ENCODE measurements at regions of chr16 and their contacts with region 1.

Region 1: GRCh38 chr16:24499193-24499814 is 40.1 kb upstream of the RBBP6 start:
- DNase-seq: peak in 1 of 2 donors; percentile 34
- ATAC-seq: no peak
- H3K4me3 ChIP-seq: no peak overlapping the region
- H3K27ac ChIP-seq: no peak overlapping the region
- H3K4me1 ChIP-seq: no peaks in the 10 kb centered on the region
- H3K27me3 ChIP-seq: no peaks in the 10 kb centered on the region

Region 2: DNA sequence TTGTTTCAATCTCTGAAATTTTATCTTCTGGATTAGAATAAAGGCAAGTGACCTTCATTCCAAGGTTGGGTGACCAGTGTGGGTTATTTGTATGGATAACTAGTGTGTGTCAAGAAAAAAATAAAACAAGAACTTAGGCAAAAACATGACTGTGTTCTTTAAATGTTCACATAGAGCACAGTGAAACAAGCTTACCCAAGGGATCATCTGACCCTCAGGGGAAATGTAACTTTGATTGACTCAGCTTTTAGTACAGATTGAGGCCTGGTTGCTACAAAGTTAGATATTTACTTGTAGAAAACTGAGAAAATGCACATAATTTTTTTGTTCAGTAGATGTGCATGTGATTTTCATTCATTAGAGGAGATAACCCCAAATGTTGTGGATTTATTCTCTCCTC is 236.5 kb before region 1 on chr16:
- intact Hi-C with region 1: loop called in 1 of 2 experiments (anchors 10 kb)
- DNase-seq: no peak
- ATAC-seq: no peak
- H3K4me3 ChIP-seq: no peak overlapping the region
- H3K27ac ChIP-seq: no peak overlapping the region
- H3K4me1 ChIP-seq: no peaks in the 10 kb centered on the region
- H3K27me3 ChIP-seq: no peaks in the 10 kb centered on the region

Region 3: GRCh38 chr16:25031441-25032307 is 532.4 kb after region 1 on chr16:
- intact Hi-C with region 1: no loop called
- DNase-seq: peak; percentile 91 to 92
- ATAC-seq: peak; percentile 97
- H3K4me3 ChIP-seq: peak overlapping the region; percentile 54 to 61
- H3K27ac ChIP-seq: peak overlapping the region in 1 of 2 donors; percentile 58
- H3K4me1 ChIP-seq: no peaks in the 10 kb centered on the region
- H3K27me3 ChIP-seq: no peaks in the 10 kb centered on the region

Measured in aorta (tissue), 5 donors.